ENCODE measurements at regions of chrX and their contacts with region 1.

Region 1: GRCh38 chrX:16882702-16883486 is 12.7 kb upstream of the RBBP7 start:
- DNase-seq: peak; percentile 74
- ATAC-seq: peak; percentile 95 to 98
- H3K4me3 ChIP-seq: peak overlapping the region; percentile 50
- H3K27ac ChIP-seq: peak overlapping the region; percentile 73 to 86
- H3K4me1 ChIP-seq: no peaks in the 10 kb centered on the region
- CTCF ChIP-seq: peak; percentile 72
- EP300 ChIP-seq: no peak
- POLR2A ChIP-seq: peak; percentile 18; the same call in 1 of the 2 replicates
- RAD21 ChIP-seq: peak; percentile 53 to 57; a peak in 4 of 5 replicates

Region 2: GRCh38 chrX:16756724-16757123 is 126.2 kb before region 1 on chrX:
- CTCF ChIA-PET with region 1: no interaction called
- POLR2A ChIA-PET with region 1: no interaction called
- DNase-seq: no peak
- ATAC-seq: no peak
- H3K4me3 ChIP-seq: no peak overlapping the region
- H3K27ac ChIP-seq: no peak overlapping the region
- H3K4me1 ChIP-seq: no peaks in the 10 kb centered on the region
- CTCF ChIP-seq: no peak
- EP300 ChIP-seq: no peak
- POLR2A ChIP-seq: no peak
- RAD21 ChIP-seq: no peak

Region 3: DNA sequence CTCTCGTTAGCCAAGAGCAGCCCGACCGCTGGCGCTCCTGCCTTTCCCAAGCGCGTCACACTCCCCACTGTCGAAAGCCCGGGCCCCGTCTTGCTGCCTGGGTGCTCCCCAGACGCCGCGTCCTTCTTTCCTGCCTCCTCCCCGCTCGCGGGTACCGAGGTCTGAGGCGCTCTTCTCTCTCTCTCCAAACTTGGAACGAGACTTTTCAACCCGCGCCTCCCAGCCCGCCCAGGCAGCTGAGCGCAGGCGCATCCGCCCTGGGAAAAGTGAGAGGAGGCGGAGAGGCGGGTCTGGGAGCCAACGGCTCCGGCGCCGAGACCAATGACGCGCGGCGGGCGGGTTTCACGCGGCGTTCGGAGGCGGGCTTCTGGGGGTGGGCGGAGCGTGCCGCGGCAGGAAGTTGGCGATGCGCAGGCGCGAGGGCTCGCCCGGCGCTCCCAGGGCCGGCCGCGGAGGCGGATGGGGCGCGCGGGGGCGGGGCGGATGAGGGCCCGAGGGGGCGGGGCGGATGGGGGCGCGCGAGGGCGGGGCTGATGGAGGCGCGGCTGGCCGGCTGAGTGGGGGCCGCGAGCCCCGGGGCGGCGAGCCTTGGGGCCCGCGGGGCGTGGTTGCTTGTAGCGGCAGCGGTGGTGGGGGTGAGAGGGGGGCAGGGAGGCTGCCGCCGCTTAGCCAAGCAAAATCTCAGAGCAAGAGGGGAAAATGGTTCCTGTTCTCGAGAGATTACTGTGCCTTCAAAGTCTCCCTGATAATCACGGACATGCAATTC is 12.6 kb before region 1 on chrX and contains the start of gene RBBP7:
- CTCF ChIA-PET with region 1: interaction called, 47 read pairs
- POLR2A ChIA-PET with region 1: interaction called, 22 read pairs
- DNase-seq: peak; percentile 60 to 91
- ATAC-seq: peak; percentile 90 to 92
- H3K4me3 ChIP-seq: peak within 1 kb of the TSS; percentile 81
- H3K27ac ChIP-seq: peak within 1 kb of the TSS; percentile 90 to 98
- H3K4me1 ChIP-seq: peaks cover 24% of the 10 kb centered on the region
- CTCF ChIP-seq: no peak
- EP300 ChIP-seq: no peak
- POLR2A ChIP-seq: peak; percentile 64
- RAD21 ChIP-seq: no peak
- polyA plus RNA-seq, gene RBBP7: 301 and 311 TPM in 2 replicates

Region 4: GRCh38 chrX:16903274-16904022 is 20.6 kb after region 1 on chrX:
- CTCF ChIA-PET with region 1: interaction called, 10 read pairs
- POLR2A ChIA-PET with region 1: no interaction called
- DNase-seq: no peak
- ATAC-seq: no peak
- H3K4me3 ChIP-seq: no peak overlapping the region
- H3K27ac ChIP-seq: no peak overlapping the region
- H3K4me1 ChIP-seq: no peaks in the 10 kb centered on the region
- CTCF ChIP-seq: no peak
- EP300 ChIP-seq: no peak
- POLR2A ChIP-seq: no peak
- RAD21 ChIP-seq: no peak

Region 5: DNA sequence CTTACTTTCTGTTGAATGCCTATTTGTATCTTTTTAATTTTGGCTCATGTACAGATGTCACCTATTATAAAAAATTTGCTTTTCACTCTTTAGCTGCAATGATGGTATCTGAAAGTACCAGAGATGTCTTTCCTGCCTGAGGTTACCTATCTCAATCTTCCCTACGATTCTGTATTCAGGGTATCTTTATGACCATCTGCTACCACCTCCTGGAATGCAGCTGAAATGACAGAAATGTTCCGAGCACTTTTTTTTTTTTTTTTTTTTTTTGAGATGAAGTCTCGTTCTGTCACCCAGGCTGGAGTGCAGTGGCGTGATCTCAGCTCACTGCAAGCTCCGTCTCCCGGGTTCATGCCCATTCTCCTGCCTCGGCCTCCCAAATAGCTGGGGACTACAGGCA is 199.9 kb after region 1 on chrX:
- CTCF ChIA-PET with region 1: interaction called, 35 read pairs
- POLR2A ChIA-PET with region 1: no interaction called
- DNase-seq: peak; percentile 42 to 44
- ATAC-seq: peak; percentile 78 to 85; a peak in 4 of 6 replicates
- H3K4me3 ChIP-seq: no peak overlapping the region
- H3K27ac ChIP-seq: no peak overlapping the region
- H3K4me1 ChIP-seq: no peaks in the 10 kb centered on the region
- CTCF ChIP-seq: peak; percentile 36
- EP300 ChIP-seq: no peak
- POLR2A ChIP-seq: no peak
- RAD21 ChIP-seq: peak; percentile 31 to 43; a peak in 2 of 5 replicates